ENCODE measurements at regions of chr1 and their contacts with region 1.

Region 1: GRCh38 chr1:201970334-201971159 is 11.9 kb upstream of the RNPEP start:
- DNase-seq: no peak
- ATAC-seq: no peak
- H3K4me3 ChIP-seq: no peak overlapping the region
- H3K27ac ChIP-seq: no peak overlapping the region
- H3K4me1 ChIP-seq: no peaks in the 10 kb centered on the region
- H3K27me3 ChIP-seq: no peaks in the 10 kb centered on the region
- CTCF ChIP-seq: no peak

Region 2: DNA sequence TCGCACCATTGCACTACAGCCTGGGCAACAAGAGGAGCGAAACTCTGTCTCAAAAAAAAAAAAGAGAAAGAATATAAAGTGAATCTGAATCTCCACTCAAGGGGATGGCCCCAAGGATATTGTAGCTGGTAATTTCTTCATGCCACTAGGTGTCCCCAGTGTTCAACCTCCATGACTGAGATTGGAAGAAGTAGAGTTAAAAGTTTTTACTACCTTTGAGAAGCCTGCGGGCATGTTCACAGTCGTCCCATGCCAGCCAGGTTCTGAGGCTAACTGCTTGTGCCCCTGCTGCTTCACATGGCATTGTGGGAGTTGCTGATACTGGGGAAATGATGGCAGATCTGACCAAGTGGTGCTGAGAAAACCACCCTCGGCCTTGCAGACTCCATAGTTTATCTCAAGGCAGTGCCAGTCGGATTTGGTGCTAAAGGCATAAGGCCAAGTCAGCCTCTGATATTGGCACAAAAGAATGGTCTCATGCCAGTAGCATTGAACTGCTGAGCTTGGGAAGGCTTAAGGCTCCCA is 92.6 kb before region 1 on chr1:
- CTCF ChIA-PET with region 1: interaction called, 3 read pairs
- POLR2A ChIA-PET with region 1: no interaction called
- intact Hi-C with region 1: loop called (anchors 1 kb)
- DNase-seq: peak; percentile 65
- ATAC-seq: peak; percentile 35
- H3K4me3 ChIP-seq: no peak overlapping the region
- H3K27ac ChIP-seq: no peak overlapping the region
- H3K4me1 ChIP-seq: peaks cover 16% of the 10 kb centered on the region
- H3K27me3 ChIP-seq: no peaks in the 10 kb centered on the region
- CTCF ChIP-seq: peak; percentile 62